ENCODE measurements at regions of chr9 and their contacts with region 1.

Region 1: GRCh38 chr9:14616188-14616982 is 76.8 kb downstream of the ZDHHC21 start:
- DNase-seq: no peak
- H3K4me3 Mint-ChIP-seq: no peak overlapping the region
- H3K27ac Mint-ChIP-seq: no peak overlapping the region
- H3K4me1 Mint-ChIP-seq: no peaks in the 10 kb centered on the region
- H3K27me3 Mint-ChIP-seq: no peaks in the 10 kb centered on the region

Region 2: GRCh38 chr9:14652729-14653377 is 36.5 kb after region 1 on chr9:
- intact Hi-C with region 1: loop called (anchors 1 kb)
- DNase-seq: no peak
- H3K4me3 Mint-ChIP-seq: no peak overlapping the region
- H3K27ac Mint-ChIP-seq: no peak overlapping the region
- H3K4me1 Mint-ChIP-seq: no peaks in the 10 kb centered on the region
- H3K27me3 Mint-ChIP-seq: no peaks in the 10 kb centered on the region

Region 3: DNA sequence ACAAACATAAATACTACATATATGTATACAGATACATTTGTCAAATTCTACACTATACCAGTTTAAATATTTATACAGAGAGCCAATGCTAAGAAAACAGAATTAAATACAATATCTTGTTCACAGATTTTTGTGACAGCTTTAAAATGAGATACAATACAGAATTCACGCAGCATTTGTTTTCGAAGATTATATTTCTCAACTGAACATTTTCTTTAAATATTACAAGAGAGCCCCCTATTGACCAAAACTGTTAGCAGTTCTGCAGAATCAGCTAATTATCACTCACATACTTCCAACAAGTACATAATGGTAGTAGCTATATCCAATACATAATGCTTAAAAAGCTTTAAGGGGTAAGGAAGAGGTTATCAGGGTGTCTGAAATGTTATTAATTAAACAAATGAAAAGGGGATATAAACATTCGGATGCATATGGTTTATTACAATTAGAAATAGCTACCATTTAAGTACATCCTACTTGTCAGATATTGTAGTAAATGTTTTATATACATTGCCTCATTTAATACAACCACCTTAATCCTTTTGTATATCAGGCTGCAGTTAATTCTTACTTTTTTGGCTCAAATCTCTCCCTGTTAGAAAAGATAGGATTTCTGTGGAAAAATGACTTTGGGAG is 45.2 kb after region 1 on chr9:
- intact Hi-C with region 1: loop called (anchors 1 kb)
- DNase-seq: no peak
- H3K4me3 Mint-ChIP-seq: no peak overlapping the region
- H3K27ac Mint-ChIP-seq: no peak overlapping the region
- H3K4me1 Mint-ChIP-seq: no peaks in the 10 kb centered on the region
- H3K27me3 Mint-ChIP-seq: no peaks in the 10 kb centered on the region

Region 4: GRCh38 chr9:14741369-14741768 is 125.0 kb after region 1 on chr9:
- intact Hi-C with region 1: no loop called
- DNase-seq: no peak
- H3K4me3 Mint-ChIP-seq: no peak overlapping the region
- H3K27ac Mint-ChIP-seq: no peak overlapping the region
- H3K4me1 Mint-ChIP-seq: no peaks in the 10 kb centered on the region
- H3K27me3 Mint-ChIP-seq: peaks cover 5% of the 10 kb centered on the region

Region 5: DNA sequence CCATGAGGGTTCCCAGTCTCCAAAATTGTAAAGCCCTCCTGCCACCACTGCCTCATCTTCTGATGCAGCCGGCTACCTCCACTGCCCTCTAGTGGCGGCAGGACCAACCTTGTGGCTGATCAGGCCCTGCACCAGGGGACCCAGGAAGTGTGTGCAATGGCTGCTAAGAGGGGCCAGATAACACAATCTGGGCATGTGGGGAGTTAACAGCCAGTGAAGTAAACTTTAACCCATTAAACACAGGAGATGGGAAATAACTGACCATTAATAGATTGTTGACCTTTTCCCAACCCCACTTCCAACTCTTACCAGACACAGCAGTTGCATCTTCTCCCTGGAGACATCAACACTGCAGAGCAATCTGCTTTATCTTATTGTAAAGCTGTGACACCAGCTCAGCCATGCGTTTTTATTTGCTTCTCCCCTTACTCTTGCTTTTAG is 230.5 kb after region 1 on chr9:
- intact Hi-C with region 1: loop called (anchors 5 kb)
- DNase-seq: peak; percentile 42
- H3K4me3 Mint-ChIP-seq: no peak overlapping the region
- H3K27ac Mint-ChIP-seq: no peak overlapping the region
- H3K4me1 Mint-ChIP-seq: no peaks in the 10 kb centered on the region
- H3K27me3 Mint-ChIP-seq: peaks cover 7% of the 10 kb centered on the region

Region 6: GRCh38 chr9:15135164-15135792 is 518.9 kb after region 1 on chr9:
- intact Hi-C with region 1: loop called (anchors 1 kb)
- DNase-seq: peak; percentile 43
- H3K4me3 Mint-ChIP-seq: no peak overlapping the region
- H3K27ac Mint-ChIP-seq: no peak overlapping the region
- H3K4me1 Mint-ChIP-seq: peaks cover 6% of the 10 kb centered on the region
- H3K27me3 Mint-ChIP-seq: peaks cover 5% of the 10 kb centered on the region

Measured in activated T-helper 1 cell treated with anti-CD3 and anti-CD28 coated beads, Interleukin-12 subunit alpha, Interleukin-12 subunit beta, Interleukin-2, Interleukin-4 antibody, amounts not matched to agents 30 ng/mL and 10 ng/mL and 1 ng/mL, durations not matched to agents 14 hours and 24 hours and 36 hours (primary cell).